ENCODE measurements at regions of chr1 and their contacts with region 1.

Region 1: DNA sequence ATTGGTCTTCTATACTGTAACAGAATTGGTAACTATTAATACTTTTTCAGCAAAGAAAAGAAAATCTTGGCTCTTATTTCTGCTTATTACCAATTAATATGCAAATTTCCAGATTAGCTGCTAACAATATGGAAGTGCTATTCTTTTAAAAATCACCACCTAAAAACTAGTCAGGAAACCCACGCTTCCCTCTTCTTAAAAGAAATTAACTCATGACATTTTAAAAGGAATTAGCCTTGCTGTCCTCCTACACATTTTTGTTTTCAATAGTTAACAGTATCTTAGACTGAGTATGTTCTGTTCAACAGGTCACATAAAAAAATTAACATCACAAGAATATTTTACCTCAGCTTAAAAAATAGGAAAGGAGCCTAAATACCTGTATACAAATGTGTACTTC is 27.3 kb downstream of the ABL2 start:
- DNase-seq: no peak
- H3K4me3 ChIP-seq: no peak overlapping the region
- H3K4me3 Mint-ChIP-seq: no peak overlapping the region
- H3K27ac ChIP-seq: no peak overlapping the region
- H3K27ac Mint-ChIP-seq: no peak overlapping the region
- H3K4me1 ChIP-seq: no peaks in the 10 kb centered on the region
- H3K4me1 Mint-ChIP-seq: peaks cover 14% of the 10 kb centered on the region
- H3K27me3 ChIP-seq: no peaks in the 10 kb centered on the region
- H3K27me3 Mint-ChIP-seq: peaks cover 0 to 4% (median 3%) of the 10 kb centered on the region in 3 donors
- CTCF ChIP-seq: no peak

Region 2: GRCh38 chr1:179190861-179191260 is 11.3 kb before region 1 on chr1:
- intact Hi-C with region 1: loop called in 1 of 2 experiments (anchors 1 kb)
- DNase-seq: peak; percentile 48 to 91 (median 81)
- H3K4me3 ChIP-seq: peak overlapping the region; percentile 7 to 62 (median 15)
- H3K4me3 Mint-ChIP-seq: peak overlapping the region; percentile 61 to 75
- H3K27ac ChIP-seq: peak overlapping the region in 1 of 2 donors; percentile 57
- H3K27ac Mint-ChIP-seq: peak overlapping the region; percentile 56 to 85 (median 72)
- H3K4me1 ChIP-seq: peaks cover 12 to 25% of the 10 kb centered on the region in 2 donors
- H3K4me1 Mint-ChIP-seq: peaks cover 34% of the 10 kb centered on the region
- H3K27me3 ChIP-seq: no peaks in the 10 kb centered on the region
- H3K27me3 Mint-ChIP-seq: no peaks in the 10 kb centered on the region
- CTCF ChIP-seq: no peak

Measured in CD14-positive monocyte (primary cell).